Gastrocnemius medialis (tissue), 4 donors: ENCODE measurements at regions of chr1 and their contacts with region 1.

Region 1: DNA sequence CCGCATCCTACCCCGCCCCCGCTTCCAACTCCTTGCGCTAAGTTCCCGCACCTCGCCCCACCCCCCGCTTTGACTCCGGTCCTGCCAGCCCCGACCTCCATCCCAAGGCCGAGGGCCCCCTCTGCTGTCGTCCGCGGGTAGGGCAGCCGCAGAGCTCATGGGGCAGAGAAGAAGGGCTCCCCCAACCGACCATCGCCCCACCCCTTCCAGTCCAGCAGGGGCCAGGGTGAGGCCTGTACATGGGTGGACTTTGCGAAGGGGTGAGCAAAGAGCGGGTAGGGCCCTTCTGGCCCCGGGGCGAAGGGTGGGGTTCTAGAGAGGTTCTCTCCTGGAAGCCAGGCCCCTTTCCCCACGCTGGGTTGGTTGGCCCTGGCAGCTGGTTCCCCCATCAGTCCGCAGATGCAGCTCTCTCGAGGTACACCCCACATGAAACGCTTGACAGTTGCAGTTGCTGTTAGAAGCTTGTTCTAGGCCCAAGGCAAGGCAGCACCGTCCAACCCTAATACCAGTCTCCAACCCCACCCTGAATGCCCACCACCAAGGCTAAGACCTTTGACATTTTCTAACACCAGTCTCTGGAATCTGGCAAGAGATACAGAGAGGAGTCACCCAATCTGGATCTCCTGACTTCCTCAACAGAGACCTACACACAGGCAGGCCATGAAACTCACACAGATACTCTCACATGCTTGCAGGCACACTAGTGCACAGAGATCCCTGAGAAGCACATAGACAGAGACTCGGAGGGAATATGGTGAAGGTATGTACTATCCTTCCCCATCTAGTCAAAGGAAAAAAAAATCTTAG is 25.3 kb upstream of the ADGRB2 start:
- DNase-seq: peak; percentile 83 to 88
- ATAC-seq: peak; percentile 79 to 80
- H3K4me3 ChIP-seq: peak overlapping the region; percentile 62 to 96 (median 68)
- H3K27ac ChIP-seq: peak overlapping the region; percentile 66 to 76 (median 74)
- H3K4me1 ChIP-seq: peaks cover 2 to 8% of the 10 kb centered on the region in 2 donors
- H3K27me3 ChIP-seq: no peaks in the 10 kb centered on the region
- CTCF ChIP-seq: peak; percentile 86 to 98 (median 93)
- POLR2A ChIP-seq: no peak

Region 2: DNA sequence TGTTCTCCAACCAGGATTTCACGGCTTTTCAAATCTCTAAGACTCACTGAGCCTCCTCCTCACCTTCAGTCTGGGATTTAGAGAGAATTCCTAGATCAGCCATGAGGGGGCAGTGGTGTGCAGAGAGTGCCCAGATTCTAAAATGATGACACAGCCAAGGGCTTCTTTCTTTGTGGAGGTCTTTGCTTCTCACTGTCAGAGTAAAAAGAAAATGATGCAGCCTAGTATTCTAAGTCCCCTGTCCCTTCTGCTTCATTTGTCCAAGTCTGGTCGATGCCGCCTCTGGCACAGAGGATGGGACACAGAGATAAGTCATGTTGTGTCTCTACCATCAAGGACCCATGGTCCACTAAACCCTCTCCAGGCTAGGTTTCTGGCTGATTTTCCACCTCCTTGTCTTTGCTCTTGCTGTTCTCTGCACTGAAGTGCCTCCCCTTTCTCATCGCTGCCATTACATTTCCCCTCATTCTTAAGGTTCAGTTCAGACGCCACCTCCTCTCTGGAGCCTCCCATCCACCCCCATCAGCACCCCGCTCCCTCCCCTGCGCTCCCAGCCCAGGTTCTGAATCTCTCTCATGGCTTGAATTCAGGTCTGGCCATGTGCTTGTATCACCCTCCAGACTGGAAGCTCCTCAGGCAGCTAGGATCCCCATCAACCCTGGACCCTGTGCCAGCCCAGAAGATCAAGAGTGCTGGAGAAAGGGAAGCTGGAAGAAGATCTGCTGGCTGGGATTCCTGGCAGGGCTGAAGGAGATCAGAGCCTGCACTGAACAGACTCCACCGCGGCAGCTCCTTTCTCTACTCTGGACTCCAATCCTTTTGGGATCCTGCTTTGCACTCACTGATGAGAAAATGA is 225.1 kb before region 1 on chr1:
- in situ Hi-C with region 1: loop called (anchors 10 to 25 kb)
- intact Hi-C with region 1: loop called (anchors 1 kb)
- DNase-seq: peak in 1 of 2 donors; percentile 28
- ATAC-seq: peak; percentile 65 to 82
- H3K4me3 ChIP-seq: no peak overlapping the region
- H3K27ac ChIP-seq: no peak overlapping the region
- H3K4me1 ChIP-seq: no peaks in the 10 kb centered on the region
- H3K27me3 ChIP-seq: no peaks in the 10 kb centered on the region
- CTCF ChIP-seq: peak; percentile 86 to 92 (median 89)
- POLR2A ChIP-seq: no peak

Region 3: DNA sequence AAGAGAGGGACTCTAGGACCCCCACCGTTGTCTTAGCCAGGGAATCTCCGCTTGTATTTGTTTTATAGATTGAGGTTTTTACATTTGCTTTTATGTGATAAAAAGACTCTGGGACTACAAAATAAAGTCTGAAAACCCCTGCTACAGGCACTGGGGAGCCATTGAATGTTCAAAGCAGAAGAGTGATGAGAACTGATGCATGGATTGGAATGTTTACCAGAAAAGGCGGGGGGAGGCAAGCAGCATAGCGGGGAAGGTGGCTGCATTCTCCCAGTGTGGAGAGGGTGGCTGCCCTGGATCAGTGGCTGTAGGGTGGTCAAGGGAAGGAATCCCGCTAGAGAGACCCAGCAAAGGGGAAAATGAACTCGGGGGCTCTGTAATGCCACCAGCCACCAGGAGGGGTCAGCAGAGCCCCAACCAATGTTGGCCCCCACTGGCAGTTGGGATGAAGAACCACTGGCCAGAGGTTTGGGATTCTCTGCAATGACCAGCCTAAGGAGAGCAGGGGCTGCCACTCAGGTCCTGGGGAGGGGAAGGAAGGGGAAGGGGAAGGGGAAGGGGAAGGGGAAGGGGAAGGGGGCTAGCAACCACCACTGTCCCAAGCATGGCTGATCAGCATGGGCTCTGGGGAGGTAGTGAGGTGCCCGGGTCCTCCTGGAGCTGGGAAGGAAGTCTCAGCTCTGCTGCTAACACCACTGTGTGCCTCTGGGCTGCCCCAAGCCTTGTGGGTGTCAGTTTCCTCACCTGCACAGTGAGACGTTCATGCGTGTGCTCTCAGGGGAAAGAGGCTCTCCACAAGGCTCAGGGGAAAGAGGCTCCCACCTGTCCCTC is 125.6 kb before region 1 on chr1:
- in situ Hi-C with region 1: loop called (anchors 5 to 10 kb)
- intact Hi-C with region 1: loop called (anchors 1 kb)
- DNase-seq: peak in 1 of 2 donors; percentile 37
- ATAC-seq: peak; percentile 53 to 57
- H3K4me3 ChIP-seq: no peak overlapping the region
- H3K27ac ChIP-seq: no peak overlapping the region
- H3K4me1 ChIP-seq: no peaks in the 10 kb centered on the region
- H3K27me3 ChIP-seq: no peaks in the 10 kb centered on the region
- CTCF ChIP-seq: peak; percentile 88 to 96 (median 94)
- POLR2A ChIP-seq: no peak

Region 4: DNA sequence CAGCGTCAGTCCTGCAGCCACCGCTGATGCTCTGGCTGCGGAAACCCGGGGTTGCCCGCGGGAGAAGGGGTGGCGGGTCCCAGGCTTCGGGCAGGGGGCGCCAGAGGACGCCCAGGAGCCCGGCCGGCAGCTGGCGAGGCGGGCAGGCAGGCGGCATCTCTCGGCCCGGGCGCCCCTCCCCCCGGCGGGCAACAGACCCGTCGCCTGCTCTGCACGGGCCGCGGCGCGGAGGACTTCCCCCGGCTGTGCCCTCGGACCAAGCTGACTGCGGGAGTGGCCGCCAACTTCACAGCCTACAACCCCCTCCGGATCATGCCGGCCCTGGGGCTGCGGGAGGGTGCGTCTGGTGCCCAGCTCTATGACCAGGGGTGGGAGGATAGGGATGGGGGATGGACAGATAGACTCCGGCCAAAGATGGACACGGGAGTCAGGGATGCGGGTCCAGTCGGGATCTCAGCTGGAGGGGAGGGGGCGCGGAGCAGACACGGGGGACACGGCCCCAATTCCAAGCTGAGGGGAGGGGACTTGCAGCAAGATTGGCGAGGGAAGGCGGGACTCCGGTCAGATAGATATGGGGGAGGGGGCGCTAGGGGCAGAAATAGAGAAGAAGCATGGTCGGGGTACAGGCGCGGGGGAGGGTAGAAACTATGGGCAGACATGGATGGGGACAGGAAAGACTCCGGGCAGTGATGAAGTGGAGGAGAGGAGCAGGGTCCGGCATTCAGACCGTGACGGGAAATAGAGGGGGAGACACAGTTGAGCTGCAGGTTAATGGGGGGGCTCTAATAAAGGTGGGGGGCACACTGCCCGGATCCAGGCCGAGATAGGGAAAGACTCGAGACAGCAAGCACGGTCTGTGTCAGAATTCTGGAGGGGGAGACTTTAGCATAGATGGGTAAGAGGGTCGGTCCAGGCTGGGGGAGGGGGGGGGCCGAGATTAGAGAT is 26.5 kb before region 1 on chr1:
- in situ Hi-C with region 1: no loop called
- intact Hi-C with region 1: loop called (anchors 1 kb)
- DNase-seq: peak; percentile 15 to 37
- ATAC-seq: peak; percentile 42 to 45
- H3K4me3 ChIP-seq: peak overlapping the region; percentile 45 to 67 (median 50)
- H3K27ac ChIP-seq: no peak overlapping the region
- H3K4me1 ChIP-seq: peaks cover 19 to 33% of the 10 kb centered on the region in 2 donors
- H3K27me3 ChIP-seq: peaks cover 25 to 33% (median 32%) of the 10 kb centered on the region in 3 donors
- CTCF ChIP-seq: peak; percentile 43 to 82 (median 64)
- POLR2A ChIP-seq: no peak